ENCODE measurements at regions of chr21 and their contacts with region 1.

Region 1: GRCh38 chr21:29091032-29091431 is 17.6 kb upstream of the CCT8 start:
- DNase-seq: no peak
- ATAC-seq: no peak
- H3K4me3 ChIP-seq: no peak overlapping the region
- H3K4me3 Mint-ChIP-seq: no peak overlapping the region
- H3K27ac ChIP-seq: no peak overlapping the region
- H3K27ac Mint-ChIP-seq: no peak overlapping the region
- H3K4me1 ChIP-seq: no peaks in the 10 kb centered on the region
- H3K4me1 Mint-ChIP-seq: no peaks in the 10 kb centered on the region
- H3K27me3 ChIP-seq: no peaks in the 10 kb centered on the region
- H3K27me3 Mint-ChIP-seq: no peaks in the 10 kb centered on the region
- CTCF ChIP-seq: no peak

Region 2: DNA sequence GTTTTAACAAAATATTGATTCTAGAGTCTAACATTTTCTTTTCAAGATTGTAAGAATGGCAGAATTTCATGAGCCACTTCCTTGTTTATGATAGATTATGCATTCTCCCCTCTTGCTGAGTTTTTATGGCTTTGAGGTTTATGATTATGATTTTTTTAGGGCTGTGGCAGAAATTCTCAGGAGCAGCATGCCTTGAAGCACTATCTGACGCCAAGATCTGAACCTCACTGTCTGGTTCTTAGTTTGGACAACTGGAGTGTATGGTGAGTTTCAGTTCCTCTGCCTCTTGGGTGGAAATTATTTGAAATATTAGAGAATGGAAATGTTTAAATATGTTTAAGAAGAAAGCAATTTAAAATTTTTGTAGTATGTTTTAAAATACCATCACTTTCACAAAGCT is 56.4 kb before region 1 on chr21:
- CTCF ChIA-PET with region 1: no interaction called
- POLR2A ChIA-PET with region 1: no interaction called
- intact Hi-C with region 1: no loop called
- DNase-seq: no peak
- ATAC-seq: no peak
- H3K4me3 ChIP-seq: no peak overlapping the region
- H3K4me3 Mint-ChIP-seq: no peak overlapping the region
- H3K27ac ChIP-seq: no peak overlapping the region
- H3K27ac Mint-ChIP-seq: no peak overlapping the region
- H3K4me1 ChIP-seq: no peaks in the 10 kb centered on the region
- H3K4me1 Mint-ChIP-seq: peaks cover 31% of the 10 kb centered on the region
- H3K27me3 ChIP-seq: no peaks in the 10 kb centered on the region
- H3K27me3 Mint-ChIP-seq: no peaks in the 10 kb centered on the region
- CTCF ChIP-seq: no peak

Region 3: GRCh38 chr21:29349702-29350101 is 258.7 kb after region 1 on chr21:
- CTCF ChIA-PET with region 1: interaction called, 4 read pairs
- POLR2A ChIA-PET with region 1: no interaction called
- intact Hi-C with region 1: loop called (anchors 1 kb)
- DNase-seq: no peak
- ATAC-seq: no peak
- H3K4me3 ChIP-seq: no peak overlapping the region
- H3K4me3 Mint-ChIP-seq: no peak overlapping the region
- H3K27ac ChIP-seq: no peak overlapping the region
- H3K27ac Mint-ChIP-seq: no peak overlapping the region
- H3K4me1 ChIP-seq: peaks cover 9% of the 10 kb centered on the region
- H3K4me1 Mint-ChIP-seq: peaks cover 21% of the 10 kb centered on the region
- H3K27me3 ChIP-seq: no peaks in the 10 kb centered on the region
- H3K27me3 Mint-ChIP-seq: no peaks in the 10 kb centered on the region
- CTCF ChIP-seq: no peak

Region 4: GRCh38 chr21:29849735-29850176 is 758.7 kb after region 1 on chr21:
- CTCF ChIA-PET with region 1: no interaction called
- POLR2A ChIA-PET with region 1: no interaction called
- intact Hi-C with region 1: loop called (anchors 1 to 2 kb)
- DNase-seq: peak in 13 of 14 experiments; percentile 2 to 62 (median 14)
- ATAC-seq: peak; percentile 90
- H3K4me3 ChIP-seq: no peak overlapping the region
- H3K4me3 Mint-ChIP-seq: no peak overlapping the region
- H3K27ac ChIP-seq: no peak overlapping the region
- H3K27ac Mint-ChIP-seq: no peak overlapping the region
- H3K4me1 ChIP-seq: no peaks in the 10 kb centered on the region
- H3K4me1 Mint-ChIP-seq: no peaks in the 10 kb centered on the region
- H3K27me3 ChIP-seq: no peaks in the 10 kb centered on the region
- H3K27me3 Mint-ChIP-seq: peaks cover 27% of the 10 kb centered on the region
- CTCF ChIP-seq: peak; percentile 73

Measured in CD4-positive, alpha-beta T cell (primary cell).